ENCODE measurements at regions of chr16 and their contacts with region 1.

Region 1: GRCh38 chr16:16817199-16817598 is 438.3 kb downstream of the NPIPA7 start:
- DNase-seq: no peak
- ATAC-seq: no peak
- H3K4me3 ChIP-seq: no peak overlapping the region
- H3K27ac ChIP-seq: no peak overlapping the region
- H3K4me1 ChIP-seq: no peaks in the 10 kb centered on the region
- H3K27me3 ChIP-seq: no peaks in the 10 kb centered on the region
- CTCF ChIP-seq: no peak
- EP300 ChIP-seq: no peak
- POLR2A ChIP-seq: no peak
- RAD21 ChIP-seq: no peak

Region 2: DNA sequence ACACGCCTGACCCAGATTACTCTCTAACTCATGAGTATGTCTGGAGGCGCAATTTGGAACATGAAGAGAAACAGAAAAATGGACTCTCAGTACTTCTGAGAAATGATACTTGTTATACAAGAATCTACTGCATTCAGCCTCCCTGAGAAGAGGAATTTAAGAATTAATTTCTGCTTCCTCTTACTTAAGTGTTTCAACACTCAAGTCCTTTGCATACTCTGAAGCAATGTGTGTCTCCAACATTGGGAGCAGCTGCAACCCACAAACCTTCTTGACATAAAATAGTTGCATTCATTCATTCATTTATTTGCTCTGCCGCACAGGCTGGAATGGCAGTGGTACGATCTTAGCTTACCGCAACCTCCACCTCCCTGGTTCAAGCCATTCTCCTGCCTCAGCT is 238.5 kb before region 1 on chr16:
- CTCF ChIA-PET with region 1: no interaction called
- POLR2A ChIA-PET with region 1: no interaction called
- RAD21 ChIA-PET with region 1: no interaction called
- SMC1A ChIA-PET with region 1: no interaction called
- in situ Hi-C with region 1: loop called (anchors 25 kb)
- intact Hi-C with region 1: no loop called
- DNase-seq: no peak
- ATAC-seq: no peak
- H3K4me3 ChIP-seq: no peak overlapping the region
- H3K27ac ChIP-seq: no peak overlapping the region
- H3K4me1 ChIP-seq: no peaks in the 10 kb centered on the region
- H3K27me3 ChIP-seq: no peaks in the 10 kb centered on the region
- CTCF ChIP-seq: no peak
- EP300 ChIP-seq: no peak
- POLR2A ChIP-seq: no peak
- RAD21 ChIP-seq: no peak

Region 3: DNA sequence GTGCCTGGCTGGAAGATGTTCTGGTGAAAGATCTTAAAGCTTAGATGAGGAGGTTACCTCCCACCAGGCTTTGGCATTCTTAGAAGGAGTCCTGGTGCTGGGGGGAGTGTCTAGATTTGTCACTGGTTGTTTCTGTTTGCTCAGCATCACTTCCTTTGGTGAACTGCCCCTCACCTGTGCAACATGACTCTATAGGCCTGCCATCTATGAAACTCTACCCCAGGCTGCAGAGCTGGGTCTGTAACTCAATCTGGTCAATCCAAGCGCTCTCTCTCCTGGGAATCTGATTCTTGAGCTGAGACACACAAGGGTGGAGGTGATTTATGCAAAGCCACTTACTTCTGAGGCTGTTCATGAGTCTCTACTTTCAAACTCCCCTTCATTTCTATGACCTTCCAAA is 38.9 kb before region 1 on chr16:
- CTCF ChIA-PET with region 1: no interaction called
- POLR2A ChIA-PET with region 1: no interaction called
- RAD21 ChIA-PET with region 1: no interaction called
- SMC1A ChIA-PET with region 1: no interaction called
- in situ Hi-C with region 1: no loop called
- intact Hi-C with region 1: no loop called
- DNase-seq: no peak
- ATAC-seq: no peak
- H3K4me3 ChIP-seq: no peak overlapping the region
- H3K27ac ChIP-seq: no peak overlapping the region
- H3K4me1 ChIP-seq: no peaks in the 10 kb centered on the region
- H3K27me3 ChIP-seq: no peaks in the 10 kb centered on the region; a peak in 1 of 4 replicates
- CTCF ChIP-seq: no peak
- EP300 ChIP-seq: no peak
- POLR2A ChIP-seq: no peak
- RAD21 ChIP-seq: no peak